Heart right ventricle (tissue), 16 donors: ENCODE measurements at regions of chr14 and their contacts with region 1.

Region 1: DNA sequence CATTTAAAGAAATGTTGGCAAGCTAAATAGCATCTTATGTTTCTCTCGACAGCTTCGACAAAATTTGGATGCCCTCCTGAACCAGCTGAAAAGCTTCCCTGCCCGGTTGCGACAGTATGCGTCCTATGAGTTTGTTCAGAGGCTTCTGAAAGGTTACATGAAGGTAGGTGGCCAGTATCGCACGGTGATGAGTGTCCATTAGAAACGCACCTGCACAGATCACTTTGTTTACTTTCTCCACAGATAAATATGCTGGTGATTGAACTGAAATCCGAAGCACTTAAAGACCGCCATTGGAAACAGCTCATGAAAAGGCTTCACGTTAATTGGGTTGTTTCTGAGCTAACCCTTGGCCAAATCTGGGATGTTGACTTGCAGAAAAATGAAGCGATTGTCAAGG is 36.5 kb downstream of the DYNC1H1 start:
- DNase-seq: no peak
- ATAC-seq: no peak
- H3K4me3 ChIP-seq: no peak overlapping the region
- H3K27ac ChIP-seq: no peak overlapping the region
- H3K4me1 ChIP-seq: no peaks in the 10 kb centered on the region
- H3K27me3 ChIP-seq: no peaks in the 10 kb centered on the region
- CTCF ChIP-seq: no peak

Region 2: DNA sequence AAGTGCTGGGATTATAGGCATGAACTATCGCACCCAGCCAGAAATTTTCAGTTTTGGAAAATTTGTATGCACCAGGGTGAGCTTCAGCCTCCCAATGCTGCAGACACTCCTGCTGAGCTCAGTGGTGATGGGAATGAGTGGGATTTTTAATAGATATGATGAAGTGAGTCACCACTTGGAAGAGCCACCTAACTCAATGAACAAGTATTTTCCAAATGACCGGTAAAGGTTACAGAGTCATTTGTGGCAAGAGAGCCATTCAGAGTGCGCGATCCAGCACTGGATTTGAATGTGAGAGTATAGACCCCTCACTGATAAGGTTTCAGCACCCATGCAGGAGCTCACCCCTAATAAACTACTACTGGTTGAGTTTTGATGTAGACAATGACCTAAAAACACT is 138.7 kb before region 1 on chr14:
- intact Hi-C with region 1: no loop called
- DNase-seq: no peak
- ATAC-seq: peak in 6 of 8 donors; percentile 46 to 82 (median 71)
- H3K4me3 ChIP-seq: no peak overlapping the region
- H3K27ac ChIP-seq: peak overlapping the region in 9 of 10 donors; percentile 0 to 87 (median 70)
- H3K4me1 ChIP-seq: peaks cover 0 to 62% (median 31%) of the 10 kb centered on the region in 9 donors
- H3K27me3 ChIP-seq: no peaks in the 10 kb centered on the region
- CTCF ChIP-seq: no peak

Region 3: GRCh38 chr14:102039157-102039556 is 38.3 kb after region 1 on chr14:
- intact Hi-C with region 1: loop called in 3 of 10 experiments (anchors 5 kb)
- DNase-seq: no peak
- ATAC-seq: no peak
- H3K4me3 ChIP-seq: no peak overlapping the region
- H3K27ac ChIP-seq: no peak overlapping the region
- H3K4me1 ChIP-seq: peaks cover 0 to 14% (median 5%) of the 10 kb centered on the region in 9 donors
- H3K27me3 ChIP-seq: no peaks in the 10 kb centered on the region
- CTCF ChIP-seq: no peak